Endothelial cell of umbilical vein (primary cell): ENCODE measurements at regions of chr11 and their contacts with region 1.

Region 1: DNA sequence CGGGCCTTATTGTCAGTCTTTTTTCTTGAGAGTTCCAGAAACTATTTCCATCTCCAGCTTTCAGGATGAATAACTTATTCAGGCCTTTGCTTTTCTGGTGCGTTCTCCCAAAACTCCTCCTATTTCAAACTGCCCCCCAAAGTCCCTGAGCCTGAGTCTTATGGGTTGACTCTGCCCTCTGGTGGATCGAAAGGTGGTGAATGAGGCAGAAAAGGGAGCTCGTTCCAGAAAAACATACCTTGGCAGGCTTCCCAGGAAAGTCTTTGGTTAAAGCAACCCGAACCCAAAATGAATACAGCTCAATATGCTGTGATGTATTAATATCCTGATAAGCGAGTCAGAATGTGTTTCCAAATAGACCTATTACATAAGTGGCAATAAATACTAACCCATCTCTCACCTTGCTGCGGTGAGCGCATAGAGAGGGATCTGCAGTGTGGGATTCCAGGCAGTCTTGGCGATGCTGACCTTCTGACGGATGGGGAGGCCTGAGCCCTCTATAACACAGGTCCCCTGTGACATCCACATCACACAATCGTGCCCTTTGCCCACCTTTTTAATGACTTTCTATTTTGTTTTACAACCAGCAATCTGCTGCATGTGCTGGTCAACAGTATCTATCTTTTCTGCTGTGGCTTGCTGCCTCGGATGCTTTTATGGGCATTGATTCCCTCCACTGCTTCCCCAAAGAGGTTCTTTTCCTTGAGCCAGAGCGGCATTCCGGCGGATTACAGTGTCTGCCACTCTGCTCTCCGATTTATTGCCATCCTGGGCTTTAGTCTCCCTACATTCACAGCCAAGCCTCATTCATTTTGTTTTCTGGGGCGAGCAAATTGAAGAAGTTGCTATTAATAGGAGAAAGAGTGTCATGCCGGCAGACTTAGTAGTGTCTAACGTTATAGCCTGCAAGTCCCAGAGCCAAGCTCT is 756.8 kb downstream of the NTM start:
- DNase-seq: peak; percentile 71
- H3K4me3 ChIP-seq: peak overlapping the region in 2 of 3 experiments; percentile 26 to 31
- H3K27ac ChIP-seq: no peak overlapping the region
- H3K4me1 ChIP-seq: peaks cover 11% of the 10 kb centered on the region
- H3K27me3 ChIP-seq: no peaks in the 10 kb centered on the region
- CTCF ChIP-seq: peak; percentile 61 to 66
- POLR2A ChIP-seq: no peak

Region 2: DNA sequence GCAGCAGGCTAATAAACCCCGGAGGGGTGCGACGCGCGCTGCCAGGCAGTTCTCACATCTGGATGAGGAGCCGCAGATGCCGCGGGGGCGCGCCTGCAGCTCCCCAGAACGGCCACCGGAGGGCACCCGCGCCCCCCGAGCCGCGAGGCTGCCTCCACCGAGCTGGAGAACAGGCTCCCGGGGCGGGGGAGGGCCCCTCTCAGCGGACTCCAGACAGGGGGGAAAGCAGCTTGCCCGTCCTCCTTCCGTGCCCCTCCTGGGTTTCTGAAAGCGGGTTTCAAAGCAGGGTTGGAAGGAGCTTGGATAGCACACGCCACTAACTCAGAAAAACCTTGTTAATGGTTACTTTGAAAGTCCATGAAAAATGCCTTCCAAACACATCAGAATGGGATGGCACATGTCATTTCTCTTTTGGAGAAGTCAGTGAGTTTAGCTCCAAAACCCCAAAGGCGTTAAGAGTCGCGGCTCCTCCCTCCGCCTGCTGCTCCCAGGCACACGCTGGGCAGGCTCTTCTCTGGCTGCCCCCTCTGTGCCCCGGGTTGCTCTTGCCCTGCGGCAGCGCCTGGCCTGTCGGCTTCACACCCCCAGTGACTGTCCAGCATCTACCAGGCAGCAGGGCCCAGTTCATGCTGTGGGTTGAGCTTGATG is 439.1 kb before region 1 on chr11:
- CTCF ChIA-PET with region 1: interaction called, 260 read pairs
- POLR2A ChIA-PET with region 1: no interaction called
- dilution Hi-C with region 1: no loop called
- intact Hi-C with region 1: loop called (anchors 1 kb)
- DNase-seq: peak; percentile 54
- H3K4me3 ChIP-seq: no peak overlapping the region
- H3K27ac ChIP-seq: no peak overlapping the region
- H3K4me1 ChIP-seq: no peaks in the 10 kb centered on the region
- H3K27me3 ChIP-seq: peaks cover 0 to 2% of the 10 kb centered on the region in 2 experiments
- CTCF ChIP-seq: peak; percentile 90 to 95
- POLR2A ChIP-seq: no peak

Region 3: DNA sequence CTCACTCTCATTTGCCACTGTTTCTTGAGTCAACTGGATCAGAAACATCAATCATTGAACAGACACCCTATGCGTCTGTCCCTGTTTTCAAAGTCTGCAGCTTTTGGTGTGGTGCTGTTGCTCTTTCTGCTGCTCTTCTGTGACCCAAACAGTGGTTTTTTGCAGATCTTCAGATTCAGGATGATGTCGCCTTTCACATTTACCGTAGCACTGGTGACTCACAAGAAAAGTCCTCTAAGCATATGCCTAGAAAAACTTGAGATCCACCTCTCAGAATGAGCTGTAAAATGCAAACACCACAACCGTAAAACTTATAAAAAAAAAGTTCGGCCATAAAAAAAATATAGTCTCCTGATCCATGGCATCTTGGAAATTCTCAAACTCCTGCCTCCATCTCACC is 356.4 kb before region 1 on chr11:
- CTCF ChIA-PET with region 1: interaction called, 15 read pairs
- POLR2A ChIA-PET with region 1: no interaction called
- dilution Hi-C with region 1: no loop called
- intact Hi-C with region 1: no loop called
- DNase-seq: no peak
- H3K4me3 ChIP-seq: no peak overlapping the region
- H3K27ac ChIP-seq: no peak overlapping the region
- H3K4me1 ChIP-seq: peaks cover 9% of the 10 kb centered on the region
- H3K27me3 ChIP-seq: peaks cover 0 to 13% of the 10 kb centered on the region in 2 experiments
- CTCF ChIP-seq: no peak
- POLR2A ChIP-seq: no peak

Region 4: DNA sequence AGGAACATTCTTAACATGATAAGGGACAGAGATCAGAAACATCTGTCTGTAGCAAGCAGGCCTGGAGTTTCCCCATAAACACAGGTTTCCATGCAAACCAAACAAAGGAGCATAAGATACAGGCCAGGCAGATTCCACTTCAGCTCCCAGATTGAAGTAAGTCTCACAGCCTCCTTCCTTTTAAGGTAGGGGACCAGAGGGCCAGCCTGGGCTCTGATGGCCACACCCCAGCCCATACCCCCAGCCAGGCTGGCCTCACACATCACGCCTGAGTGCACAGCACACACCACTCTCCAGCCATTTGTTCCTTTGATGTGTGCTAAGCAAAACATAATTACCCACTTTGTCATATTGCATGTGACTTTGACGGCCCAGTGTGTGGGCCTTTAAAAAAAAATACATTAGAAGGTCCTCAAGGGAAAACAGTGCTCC is 238.1 kb before region 1 on chr11:
- CTCF ChIA-PET with region 1: interaction called, 29 read pairs
- POLR2A ChIA-PET with region 1: no interaction called
- dilution Hi-C with region 1: no loop called
- intact Hi-C with region 1: no loop called
- DNase-seq: no peak
- H3K4me3 ChIP-seq: no peak overlapping the region
- H3K27ac ChIP-seq: peak overlapping the region; percentile 45
- H3K4me1 ChIP-seq: peaks cover 13% of the 10 kb centered on the region
- H3K27me3 ChIP-seq: peaks cover 0 to 2% of the 10 kb centered on the region in 2 experiments
- CTCF ChIP-seq: no peak
- POLR2A ChIP-seq: no peak

Region 5: GRCh38 chr11:131977231-131977630 is 150.0 kb before region 1 on chr11:
- CTCF ChIA-PET with region 1: interaction called, 12 read pairs
- POLR2A ChIA-PET with region 1: no interaction called
- dilution Hi-C with region 1: no loop called
- intact Hi-C with region 1: no loop called
- DNase-seq: no peak
- H3K4me3 ChIP-seq: no peak overlapping the region
- H3K27ac ChIP-seq: no peak overlapping the region
- H3K4me1 ChIP-seq: peaks cover 3% of the 10 kb centered on the region
- H3K27me3 ChIP-seq: no peaks in the 10 kb centered on the region
- CTCF ChIP-seq: no peak
- POLR2A ChIP-seq: no peak

Region 6: GRCh38 chr11:132072044-132072857 is 55.0 kb before region 1 on chr11:
- CTCF ChIA-PET with region 1: interaction called, 48 read pairs
- POLR2A ChIA-PET with region 1: interaction called, 3 read pairs
- dilution Hi-C with region 1: no loop called
- intact Hi-C with region 1: loop called (anchors 1 kb)
- DNase-seq: peak; percentile 96
- H3K4me3 ChIP-seq: no peak overlapping the region
- H3K27ac ChIP-seq: peak overlapping the region; percentile 99
- H3K4me1 ChIP-seq: peaks cover 32% of the 10 kb centered on the region
- H3K27me3 ChIP-seq: no peaks in the 10 kb centered on the region
- CTCF ChIP-seq: no peak
- POLR2A ChIP-seq: peak; percentile 68

Region 7: DNA sequence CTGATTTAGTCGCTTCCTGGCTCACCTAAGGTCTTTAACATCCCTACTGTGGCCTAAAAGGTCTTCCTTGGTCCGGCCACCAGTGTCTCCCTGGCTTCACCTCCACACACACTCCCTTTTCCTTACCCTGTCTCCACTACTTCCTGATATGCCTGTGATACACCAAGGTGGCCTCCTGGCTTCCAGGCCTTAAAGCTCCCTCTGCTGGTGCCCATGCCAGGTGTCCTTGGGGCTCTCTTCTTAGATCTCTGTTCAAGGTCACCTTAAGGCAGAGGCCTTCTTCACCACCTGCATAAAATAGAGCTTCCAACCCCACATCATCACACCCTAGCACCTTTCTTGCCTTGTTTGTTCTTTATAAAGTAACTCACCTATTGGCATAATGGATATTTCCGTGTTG is 30.9 kb after region 1 on chr11:
- CTCF ChIA-PET with region 1: interaction called, 14 read pairs
- POLR2A ChIA-PET with region 1: no interaction called
- dilution Hi-C with region 1: no loop called
- intact Hi-C with region 1: no loop called
- DNase-seq: peak; percentile 32
- H3K4me3 ChIP-seq: no peak overlapping the region
- H3K27ac ChIP-seq: no peak overlapping the region
- H3K4me1 ChIP-seq: no peaks in the 10 kb centered on the region
- H3K27me3 ChIP-seq: no peaks in the 10 kb centered on the region
- CTCF ChIP-seq: peak; percentile 21 to 42
- POLR2A ChIP-seq: no peak

Region 8: GRCh38 chr11:132234878-132235277 is 107.6 kb after region 1 on chr11:
- CTCF ChIA-PET with region 1: no interaction called
- POLR2A ChIA-PET with region 1: no interaction called
- dilution Hi-C with region 1: no loop called
- intact Hi-C with region 1: no loop called
- DNase-seq: no peak
- H3K4me3 ChIP-seq: no peak overlapping the region
- H3K27ac ChIP-seq: no peak overlapping the region
- H3K4me1 ChIP-seq: no peaks in the 10 kb centered on the region
- H3K27me3 ChIP-seq: no peaks in the 10 kb centered on the region
- CTCF ChIP-seq: no peak
- POLR2A ChIP-seq: no peak